Endothelial cell of umbilical vein (primary cell): ENCODE measurements at regions of chr2 and their contacts with region 1.

Region 1: GRCh38 chr2:156445296-156446217 is 9.4 kb downstream of the GPD2 start:
- DNase-seq: peak; percentile 69
- H3K4me3 ChIP-seq: no peak overlapping the region
- H3K27ac ChIP-seq: no peak overlapping the region
- H3K4me1 ChIP-seq: peaks cover 6% of the 10 kb centered on the region
- H3K27me3 ChIP-seq: no peaks in the 10 kb centered on the region
- CTCF ChIP-seq: no peak
- POLR2A ChIP-seq: no peak

Region 2: DNA sequence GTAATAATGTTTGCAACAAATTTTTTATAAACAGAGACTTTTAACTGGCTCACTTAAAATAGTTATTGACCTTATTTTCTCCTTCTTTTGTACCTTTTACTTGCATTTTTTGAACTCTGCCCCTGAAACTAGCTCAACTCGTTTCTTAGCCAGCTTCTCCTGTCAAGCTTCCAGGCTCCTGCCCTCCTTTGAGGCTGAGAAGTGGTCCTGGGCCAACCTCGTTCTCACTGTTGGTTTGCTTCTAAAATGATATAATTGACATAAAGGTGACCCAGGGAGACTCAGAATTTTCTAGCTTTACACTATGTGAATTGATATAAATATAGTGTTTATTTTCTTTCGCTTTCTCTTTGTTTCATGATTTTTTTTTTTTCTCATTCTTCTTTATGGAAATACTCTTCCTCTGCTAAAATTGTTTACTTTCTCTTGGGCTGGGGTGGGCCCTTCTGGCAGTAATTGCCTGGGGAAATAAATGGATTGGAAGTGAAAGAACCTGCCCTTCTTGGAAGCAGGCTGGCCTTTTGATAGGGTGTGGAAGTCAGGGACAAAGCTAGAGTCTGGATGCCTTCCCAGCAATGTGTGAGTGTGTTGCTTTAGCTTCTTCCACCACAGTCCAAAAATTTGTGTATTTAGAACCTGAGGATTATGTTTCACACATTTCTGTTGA is 21.3 kb after region 1 on chr2:
- CTCF ChIA-PET with region 1: interaction called, 5 read pairs
- POLR2A ChIA-PET with region 1: no interaction called
- dilution Hi-C with region 1: no loop called
- intact Hi-C with region 1: loop called (anchors 1 kb)
- DNase-seq: peak; percentile 60
- H3K4me3 ChIP-seq: peak overlapping the region in 1 of 3 experiments; percentile 16
- H3K27ac ChIP-seq: no peak overlapping the region
- H3K4me1 ChIP-seq: peaks cover 27% of the 10 kb centered on the region
- H3K27me3 ChIP-seq: no peaks in the 10 kb centered on the region
- CTCF ChIP-seq: no peak
- POLR2A ChIP-seq: no peak